Activated CD4-positive, alpha-beta memory T cell treated with anti-CD3 and anti-CD28 coated beads, Interleukin-2, amount 10 ng/mL, durations not matched to agents 7 days and 5 days (primary cell): ENCODE measurements at regions of chr4 and their contacts with region 1.

Region 1: GRCh38 chr4:177047070-177047850 is 254.5 kb upstream of the VEGFC start:
- DNase-seq: peak; percentile 60
- H3K4me3 Mint-ChIP-seq: no peak overlapping the region
- H3K27ac Mint-ChIP-seq: no peak overlapping the region
- H3K4me1 Mint-ChIP-seq: no peaks in the 10 kb centered on the region
- H3K27me3 Mint-ChIP-seq: peaks cover 12% of the 10 kb centered on the region

Region 2: DNA sequence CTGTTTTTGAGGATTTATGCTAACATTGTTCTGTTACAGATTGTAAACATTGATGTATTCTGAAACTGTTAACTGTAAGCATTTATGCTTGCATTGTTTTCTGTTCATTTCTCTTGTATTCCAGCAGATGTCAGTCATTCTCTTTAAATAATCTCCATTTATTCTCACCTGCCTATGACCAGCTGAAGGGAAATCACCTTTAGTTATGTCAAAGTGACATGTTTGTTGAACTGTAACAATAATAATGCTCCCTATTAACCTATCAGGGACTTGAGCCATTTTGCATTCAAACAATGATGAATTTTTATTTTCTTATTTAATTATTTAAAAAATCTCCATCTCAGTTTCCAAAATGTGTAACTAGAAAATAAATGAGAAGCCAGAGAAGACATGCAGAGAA is 669.5 kb before region 1 on chr4:
- CTCF ChIA-PET with region 1: interaction called, 15 read pairs
- POLR2A ChIA-PET with region 1: no interaction called
- DNase-seq: no peak
- H3K4me3 Mint-ChIP-seq: no peak overlapping the region
- H3K27ac Mint-ChIP-seq: no peak overlapping the region
- H3K4me1 Mint-ChIP-seq: no peaks in the 10 kb centered on the region
- H3K27me3 Mint-ChIP-seq: peaks cover 5% of the 10 kb centered on the region

Region 3: GRCh38 chr4:177033135-177033534 is 14.1 kb before region 1 on chr4:
- CTCF ChIA-PET with region 1: interaction called, 17 read pairs
- POLR2A ChIA-PET with region 1: no interaction called
- DNase-seq: no peak
- H3K4me3 Mint-ChIP-seq: no peak overlapping the region
- H3K27ac Mint-ChIP-seq: no peak overlapping the region
- H3K4me1 Mint-ChIP-seq: no peaks in the 10 kb centered on the region
- H3K27me3 Mint-ChIP-seq: peaks cover 3% of the 10 kb centered on the region

Region 4: DNA sequence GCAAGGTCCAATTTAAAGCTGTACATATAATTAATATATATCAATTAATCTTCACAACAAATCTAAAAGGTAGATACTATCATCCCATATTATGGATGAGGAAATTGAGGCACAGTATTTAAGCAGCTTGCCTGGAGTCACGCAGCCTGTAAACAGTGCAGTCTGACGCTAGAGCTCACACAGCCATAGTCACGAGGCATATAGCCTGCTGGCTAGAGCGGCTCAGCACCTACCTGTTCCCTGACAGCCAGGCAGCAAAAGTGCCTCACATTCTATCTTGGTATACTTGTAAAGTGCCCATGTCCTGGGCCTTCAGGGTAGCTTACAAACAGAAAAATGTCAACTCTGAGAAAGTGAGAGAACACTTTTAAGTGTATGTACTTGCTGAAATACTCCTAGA is 39.8 kb after region 1 on chr4:
- CTCF ChIA-PET with region 1: no interaction called
- POLR2A ChIA-PET with region 1: no interaction called
- DNase-seq: no peak
- H3K4me3 Mint-ChIP-seq: no peak overlapping the region
- H3K27ac Mint-ChIP-seq: no peak overlapping the region
- H3K4me1 Mint-ChIP-seq: no peaks in the 10 kb centered on the region
- H3K27me3 Mint-ChIP-seq: no peaks in the 10 kb centered on the region